ENCODE measurements at regions of chr4 and their contacts with region 1.

Region 1: DNA sequence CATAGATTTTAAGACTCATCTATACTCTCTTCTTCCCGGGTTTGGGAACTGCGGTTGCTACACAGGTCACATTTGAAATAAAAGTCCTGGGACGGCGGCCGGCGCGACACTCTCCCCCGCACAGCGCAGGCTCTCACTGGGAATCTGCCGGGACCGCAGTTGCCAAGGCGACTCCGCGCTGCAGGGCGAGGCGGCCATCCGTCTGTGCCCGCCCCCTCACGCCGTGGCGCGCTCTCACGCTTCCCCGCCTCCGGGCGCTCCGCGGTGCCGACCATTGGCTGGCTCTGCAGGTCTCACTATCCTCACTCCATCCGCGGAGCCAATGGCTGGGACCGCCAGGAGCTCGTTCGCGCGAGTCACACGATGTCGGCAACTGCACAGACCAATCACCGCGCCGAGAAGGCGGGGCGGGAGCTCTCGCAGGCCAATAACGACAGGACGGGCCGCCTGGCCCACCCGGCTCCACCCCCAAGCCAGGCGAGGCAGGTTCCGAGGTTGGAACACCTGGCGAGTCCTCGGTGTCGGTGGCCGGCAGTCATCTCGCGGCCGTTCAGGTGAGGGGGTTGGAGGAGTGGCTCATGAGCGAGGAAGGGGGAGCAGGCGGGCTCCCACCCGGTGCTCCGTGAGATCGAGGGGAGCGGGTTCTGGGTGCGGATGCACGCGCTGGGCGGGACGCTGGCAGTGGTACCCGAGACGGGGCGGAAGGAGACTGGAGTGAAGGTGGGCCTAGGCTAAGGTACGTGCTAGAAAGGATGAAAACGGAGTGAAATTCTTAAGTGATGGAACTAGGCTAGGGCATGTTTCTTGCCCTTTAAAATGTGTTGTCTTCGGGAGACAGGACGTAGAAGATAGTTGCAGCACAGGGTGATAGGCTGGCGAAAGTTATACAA is at the start of gene MSMO1:
- DNase-seq: peak; percentile 99 to 100 (median 100)

Region 2: GRCh38 chr4:164023214-164023613 is 1304.2 kb before region 1 on chr4:
- intact Hi-C with region 1: no loop called
- DNase-seq: no peak

Region 3: GRCh38 chr4:165207431-165208220 is 119.8 kb before region 1 on chr4 and contains the start of gene KLHL2:
- intact Hi-C with region 1: loop called (anchors 2 kb)
- DNase-seq: peak; percentile 39 to 92 (median 82)